Sciatic nerve (tissue), 2 donors: ENCODE measurements at regions of chr3 and their contacts with region 1.

Region 1: DNA sequence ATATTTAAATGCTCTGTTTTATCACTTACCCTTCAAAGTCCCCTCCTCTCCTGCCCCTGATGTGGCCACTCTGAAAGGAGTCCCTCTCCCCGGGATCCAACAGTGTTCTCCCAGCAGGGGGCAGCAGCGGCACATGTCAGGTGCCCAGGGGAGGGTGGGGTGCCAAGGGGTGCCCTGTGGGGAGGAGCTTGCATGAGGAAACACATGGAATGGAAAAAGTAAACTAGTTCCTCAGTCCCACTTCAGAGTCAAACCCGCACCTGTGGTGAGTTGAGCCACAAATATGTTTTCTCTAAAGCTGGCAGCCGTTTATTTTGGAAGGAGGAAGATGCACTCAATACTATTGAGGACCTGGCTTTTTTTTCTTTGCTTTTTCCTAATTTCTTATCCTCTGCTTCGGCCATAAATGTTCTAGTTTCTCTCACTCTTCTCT is 30.1 kb upstream of the NRROS start:
- DNase-seq: peak; percentile 92
- ATAC-seq: peak; percentile 98

Region 2: GRCh38 chr3:196149831-196150521 is 459.4 kb before region 1 on chr3:
- intact Hi-C with region 1: no loop called
- DNase-seq: no peak
- ATAC-seq: no peak

Region 3: GRCh38 chr3:196684548-196685407 is 75.4 kb after region 1 on chr3:
- intact Hi-C with region 1: loop called (anchors 10 kb)
- DNase-seq: peak; percentile 80
- ATAC-seq: peak; percentile 79